OCI-LY7 (cell line): ENCODE measurements at regions of chr6 and their contacts with region 1.

Region 1: DNA sequence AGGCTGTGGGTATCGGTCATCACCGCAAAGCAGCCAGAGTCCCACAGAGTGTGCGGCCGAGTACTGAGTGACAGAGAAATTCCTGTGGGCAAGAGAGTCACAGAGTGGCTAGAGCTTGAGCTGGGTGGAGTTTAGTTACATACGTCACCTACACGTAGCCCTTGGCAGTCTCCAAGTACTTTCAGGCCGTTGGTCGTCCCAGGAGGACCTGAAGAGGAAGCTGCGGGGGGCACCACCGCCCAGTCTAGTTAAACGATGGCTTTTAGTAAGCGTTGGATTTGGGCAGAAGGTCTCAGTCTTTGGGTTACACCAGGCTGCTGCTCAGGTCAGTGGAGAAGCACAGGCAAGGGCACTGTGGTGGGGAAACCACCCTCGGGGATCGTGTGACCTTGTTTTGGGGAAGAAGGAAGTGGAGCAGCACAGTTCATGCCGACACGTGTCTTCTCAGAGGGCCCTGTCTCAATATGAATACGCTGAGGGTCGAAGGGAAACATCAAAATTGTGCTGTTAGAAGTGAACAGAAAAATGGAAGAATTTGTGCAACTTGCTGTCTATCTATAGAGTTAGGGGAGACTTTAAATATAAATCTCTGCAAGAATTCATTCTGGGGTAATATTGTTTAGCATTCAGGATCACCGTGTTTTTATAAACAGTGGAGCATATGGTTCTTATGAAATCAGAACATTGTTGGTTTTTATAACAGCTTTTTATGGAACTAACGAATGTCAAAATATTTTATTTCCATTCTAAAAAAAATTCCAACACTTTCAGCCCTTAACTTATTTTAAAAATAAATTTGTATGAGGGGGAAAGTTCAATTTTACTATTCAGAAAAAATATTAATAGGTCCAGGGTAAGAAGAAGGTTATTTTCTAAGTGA is 28.6 kb downstream of the KIF25 start:
- DNase-seq: no peak
- H3K4me3 ChIP-seq: no peak overlapping the region
- H3K27ac ChIP-seq: no peak overlapping the region
- H3K4me1 ChIP-seq: no peaks in the 10 kb centered on the region
- CTCF ChIP-seq: no peak

Region 2: DNA sequence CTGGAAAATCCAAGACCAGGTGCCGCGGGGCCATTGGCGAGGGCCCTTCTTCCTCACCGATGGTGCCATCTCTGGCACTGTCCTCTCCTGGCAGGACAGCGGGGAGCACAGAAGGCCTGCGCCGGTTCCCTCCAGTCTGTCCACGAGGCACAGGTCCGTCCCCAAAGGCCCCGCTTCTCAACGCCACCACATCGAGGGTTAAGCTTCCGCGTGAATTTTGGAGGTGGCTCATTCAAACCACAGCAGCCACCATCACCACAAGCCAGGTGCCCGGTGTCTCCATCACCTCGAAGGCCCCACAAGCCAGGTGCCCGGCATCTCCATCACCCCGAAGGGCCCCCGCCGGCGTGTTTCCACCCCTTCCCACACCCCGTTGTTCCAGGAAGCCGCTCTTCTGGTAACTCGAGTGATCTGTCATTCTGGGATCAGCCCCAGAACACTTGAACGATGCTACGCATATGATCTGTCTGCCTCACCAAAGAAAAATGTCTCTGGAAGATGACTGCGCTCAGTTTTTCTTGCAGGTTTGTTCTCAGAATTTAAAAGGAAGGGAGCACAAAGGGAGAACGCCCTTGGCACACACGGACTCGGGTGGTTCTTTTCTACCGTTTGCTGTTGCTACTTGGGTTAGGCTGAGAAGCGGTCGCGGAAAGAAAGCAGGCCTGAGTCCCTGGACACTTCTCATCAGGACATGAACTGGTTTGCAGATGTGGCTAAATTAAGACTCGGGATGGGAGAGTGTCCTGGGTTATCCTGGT is 38.5 kb before region 1 on chr6:
- CTCF ChIA-PET with region 1: no interaction called
- POLR2A ChIA-PET with region 1: no interaction called
- intact Hi-C with region 1: no loop called
- DNase-seq: no peak
- H3K4me3 ChIP-seq: no peak overlapping the region
- H3K27ac ChIP-seq: no peak overlapping the region
- H3K4me1 ChIP-seq: no peaks in the 10 kb centered on the region
- CTCF ChIP-seq: no peak

Region 3: GRCh38 chr6:168013257-168013915 is 12.7 kb before region 1 on chr6:
- CTCF ChIA-PET with region 1: no interaction called
- POLR2A ChIA-PET with region 1: interaction called, 13 read pairs
- intact Hi-C with region 1: no loop called
- DNase-seq: no peak
- H3K4me3 ChIP-seq: no peak overlapping the region
- H3K27ac ChIP-seq: no peak overlapping the region
- H3K4me1 ChIP-seq: no peaks in the 10 kb centered on the region
- CTCF ChIP-seq: no peak